ENCODE measurements at regions of chr1 and their contacts with region 1.

Region 1: DNA sequence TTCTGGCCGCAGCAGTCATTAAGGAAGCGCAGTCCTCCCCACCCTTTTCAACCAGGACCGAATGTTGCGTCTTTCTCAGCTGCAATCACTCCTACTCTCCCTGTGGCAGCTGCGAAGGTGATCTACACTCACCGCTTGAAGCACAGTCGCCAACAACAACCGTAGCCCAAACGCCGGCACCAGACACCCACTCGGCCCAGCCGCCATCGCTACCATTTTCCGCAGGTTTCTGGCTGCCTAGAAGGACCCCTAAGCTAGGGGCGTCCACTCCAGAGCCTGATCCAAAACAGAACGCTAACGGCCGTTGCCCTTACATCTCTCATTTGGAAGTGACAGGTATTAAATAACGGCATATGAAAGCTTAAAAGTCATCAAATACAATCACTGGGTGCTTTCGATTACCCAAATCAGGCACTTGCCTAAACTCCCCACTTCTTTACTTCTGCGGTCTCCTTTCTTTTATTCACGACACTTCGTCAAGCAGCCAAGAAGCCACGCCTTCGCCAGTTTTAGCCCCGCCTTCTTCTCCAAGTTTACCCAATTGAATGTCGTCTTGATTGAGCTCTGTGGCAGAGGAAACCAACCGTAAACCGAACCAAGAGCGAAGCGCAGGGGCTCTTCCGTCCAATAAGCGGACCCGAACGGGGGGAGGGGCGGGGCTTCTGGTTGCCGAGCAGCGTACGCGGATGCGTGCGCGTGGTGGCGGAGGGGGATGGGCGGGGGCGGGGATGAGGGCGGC is at the start of gene SELENOF:
- H3K4me3 Mint-ChIP-seq: no peak within 1 kb of the TSS
- H3K27ac Mint-ChIP-seq: no peak within 1 kb of the TSS
- H3K4me1 Mint-ChIP-seq: peaks cover 38% of the 10 kb centered on the region
- H3K27me3 Mint-ChIP-seq: no peaks in the 10 kb centered on the region

Region 2: GRCh38 chr1:86395771-86396497 is 518.1 kb before region 1 on chr1 and contains the start of gene ODF2L:
- intact Hi-C with region 1: loop called (anchors 10 kb)
- H3K4me3 Mint-ChIP-seq: peak within 1 kb of the TSS; percentile 86
- H3K27ac Mint-ChIP-seq: peak within 1 kb of the TSS; percentile 86
- H3K4me1 Mint-ChIP-seq: peaks cover 15% of the 10 kb centered on the region
- H3K27me3 Mint-ChIP-seq: no peaks in the 10 kb centered on the region

Region 3: DNA sequence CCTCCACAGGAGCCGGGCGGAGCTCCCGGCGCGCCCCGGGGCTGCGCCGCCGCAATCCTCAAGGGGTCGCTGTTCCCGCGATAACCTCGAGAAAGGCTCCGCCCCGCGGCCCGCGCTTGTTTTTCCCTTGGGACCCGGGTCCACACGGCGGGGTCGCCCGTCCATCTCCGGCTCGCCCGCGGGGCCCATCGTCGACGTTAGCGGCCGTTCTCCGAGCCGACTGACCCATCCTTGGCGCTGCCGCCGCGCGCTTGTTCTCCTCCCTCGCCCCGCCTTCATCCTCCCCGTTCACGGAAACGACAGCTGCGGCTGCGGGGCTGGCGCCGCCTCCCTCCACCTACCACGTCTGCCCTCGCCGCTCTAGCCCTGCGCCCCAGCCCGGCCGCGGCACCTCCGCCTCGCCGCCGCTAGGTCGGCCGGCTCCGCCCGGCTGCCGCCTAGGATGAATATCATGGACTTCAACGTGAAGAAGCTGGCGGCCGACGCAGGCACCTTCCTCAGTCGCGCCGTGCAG is 209.6 kb before region 1 on chr1 and contains the start of gene SH3GLB1:
- intact Hi-C with region 1: loop called (anchors 10 kb)
- H3K4me3 Mint-ChIP-seq: peak within 1 kb of the TSS; percentile 88
- H3K27ac Mint-ChIP-seq: peak within 1 kb of the TSS; percentile 98
- H3K4me1 Mint-ChIP-seq: peaks cover 22% of the 10 kb centered on the region
- H3K27me3 Mint-ChIP-seq: peaks cover 3% of the 10 kb centered on the region

Region 4: DNA sequence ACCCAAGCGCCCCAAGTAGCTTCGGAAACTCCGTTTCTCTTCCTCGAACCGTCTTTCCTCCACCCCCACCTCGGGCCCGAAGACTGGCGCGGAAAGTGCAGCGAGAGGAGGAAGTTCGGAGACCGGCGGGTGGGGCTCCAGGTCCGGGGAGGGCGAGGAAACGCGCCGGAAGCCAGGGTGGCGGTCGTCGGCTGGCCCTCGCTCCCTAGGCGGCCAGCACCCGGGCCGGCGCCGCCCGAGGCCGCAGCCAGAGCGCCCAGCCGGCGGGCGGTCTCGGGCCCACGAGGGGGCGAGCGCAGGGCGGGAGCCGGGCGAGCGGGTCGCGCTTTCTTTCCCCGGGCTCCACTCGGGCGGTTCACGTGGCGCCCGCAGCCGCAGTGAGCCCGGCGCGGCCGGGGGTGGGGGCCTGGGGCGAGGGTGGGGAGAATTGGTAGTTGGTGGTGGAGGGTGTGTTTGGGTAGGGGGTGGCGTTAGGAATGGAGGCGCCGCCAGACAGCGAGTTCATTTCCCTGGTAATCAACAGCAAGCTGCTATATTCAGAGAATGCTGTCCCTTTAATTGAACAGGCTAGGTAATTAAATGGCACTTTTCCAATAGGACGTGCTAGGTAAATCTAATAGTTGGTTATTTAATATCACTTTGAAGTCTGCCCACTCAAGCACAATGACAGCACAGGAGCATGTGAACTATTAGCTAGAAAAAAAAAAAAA is 421.3 kb after region 1 on chr1:
- intact Hi-C with region 1: loop called (anchors 10 kb)
- H3K4me3 Mint-ChIP-seq: peak overlapping the region; percentile 78
- H3K27ac Mint-ChIP-seq: peak overlapping the region; percentile 85
- H3K4me1 Mint-ChIP-seq: peaks cover 62% of the 10 kb centered on the region
- H3K27me3 Mint-ChIP-seq: peaks cover 3% of the 10 kb centered on the region

Region 5: DNA sequence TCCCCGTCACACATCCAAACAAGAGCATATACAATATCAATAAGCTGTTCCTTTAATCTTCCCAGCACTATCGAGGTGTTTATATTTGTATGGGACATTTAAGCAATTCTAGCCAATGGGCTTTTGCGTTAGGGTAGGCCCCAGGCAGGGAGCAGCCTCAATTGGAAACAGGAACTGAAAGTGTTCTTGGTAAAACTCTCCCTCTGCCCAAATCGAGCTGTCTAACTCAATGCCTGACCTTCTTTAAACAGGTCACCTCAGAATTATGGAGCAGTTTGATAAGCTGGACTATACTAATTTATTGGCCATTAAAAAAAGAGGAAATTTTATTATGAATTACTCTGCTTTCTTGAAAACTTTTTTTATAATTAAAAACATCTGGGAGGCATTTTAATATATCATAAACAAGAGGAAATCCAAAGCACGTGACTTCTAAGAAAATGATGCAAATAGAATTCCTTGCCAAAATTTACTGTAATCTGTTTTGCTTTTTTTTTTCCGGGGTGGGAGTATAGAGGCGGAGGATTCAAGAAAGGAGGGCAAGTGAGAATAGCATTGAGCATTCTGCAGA is 912.7 kb after region 1 on chr1:
- intact Hi-C with region 1: loop called (anchors 5 kb)
- H3K4me3 Mint-ChIP-seq: no peak overlapping the region
- H3K27ac Mint-ChIP-seq: peak overlapping the region; percentile 74
- H3K4me1 Mint-ChIP-seq: peaks cover 39% of the 10 kb centered on the region
- H3K27me3 Mint-ChIP-seq: no peaks in the 10 kb centered on the region

Region 6: GRCh38 chr1:88683541-88684481 is 1769.7 kb after region 1 on chr1 and contains the start of gene PKN2:
- intact Hi-C with region 1: loop called (anchors 10 kb)
- H3K4me3 Mint-ChIP-seq: peak within 1 kb of the TSS; percentile 99
- H3K27ac Mint-ChIP-seq: peak within 1 kb of the TSS; percentile 97
- H3K4me1 Mint-ChIP-seq: peaks cover 16% of the 10 kb centered on the region
- H3K27me3 Mint-ChIP-seq: no peaks in the 10 kb centered on the region

Measured in dendritic cell treated with granulocyte-macrophage colony-stimulating factor and Interleukin-4, amounts not matched to agents 40 ng/mL and 50 ng/mL, for 4 days (primary cell).